B cell (primary cell): ENCODE measurements at regions of chr19 and their contacts with region 1.

Region 1: DNA sequence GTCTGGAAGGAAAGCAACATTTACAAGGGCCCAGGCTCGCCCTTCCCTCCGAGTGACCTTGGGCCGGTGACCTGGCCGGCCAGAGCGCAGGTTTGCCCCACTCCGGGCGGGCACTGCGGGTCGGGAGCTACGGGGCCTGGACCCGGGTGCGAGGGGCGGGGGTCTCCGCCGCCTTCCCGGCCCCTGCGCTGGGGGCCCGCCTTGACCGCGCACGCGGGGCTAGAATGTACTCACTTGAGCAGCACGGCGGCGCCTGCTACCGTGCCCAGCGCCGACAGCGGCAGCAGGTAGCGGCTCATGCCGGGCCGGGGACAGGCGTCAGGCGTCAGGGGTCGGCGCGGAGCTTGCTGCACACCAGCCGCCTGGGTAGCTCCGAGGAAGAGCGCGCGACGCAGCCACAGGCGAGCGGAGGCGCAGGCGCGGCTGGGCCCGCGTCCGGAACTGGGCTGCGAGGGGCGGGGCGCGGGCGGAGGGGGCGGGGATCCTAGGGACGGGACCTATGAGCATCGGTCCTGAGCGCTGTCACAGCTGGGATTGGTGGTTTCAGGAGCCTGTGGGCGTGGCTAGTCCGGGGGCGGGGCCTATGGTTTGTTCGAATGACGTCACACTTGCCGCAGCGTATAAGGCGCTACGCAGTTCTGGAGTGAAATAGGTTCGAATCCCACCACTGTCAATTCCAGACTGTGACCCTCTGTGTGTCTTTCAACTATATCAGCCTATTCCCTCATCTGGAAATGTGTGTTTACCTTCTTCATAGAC is at the start of gene RDH13:
- DNase-seq: peak; percentile 96
- ATAC-seq: peak; percentile 99
- H3K4me3 ChIP-seq: peak within 1 kb of the TSS in 4 of 5 experiments; percentile 49 to 68 (median 64)
- H3K4me3 Mint-ChIP-seq: peak within 1 kb of the TSS; percentile 82
- H3K27ac ChIP-seq: peak within 1 kb of the TSS; percentile 38 to 71
- H3K27ac Mint-ChIP-seq: peak within 1 kb of the TSS; percentile 77
- H3K4me1 ChIP-seq: peaks cover 7 to 13% of the 10 kb centered on the region in 2 donors
- H3K4me1 Mint-ChIP-seq: peaks cover 6% of the 10 kb centered on the region
- H3K27me3 ChIP-seq: peaks cover 0 to 19% (median under 1%) of the 10 kb centered on the region in 4 experiments
- H3K27me3 Mint-ChIP-seq: peaks cover 16% of the 10 kb centered on the region
- CTCF ChIP-seq: no peak
- total RNA-seq, gene RDH13: 17.5 and 20.2 TPM in 2 replicates

Region 2: DNA sequence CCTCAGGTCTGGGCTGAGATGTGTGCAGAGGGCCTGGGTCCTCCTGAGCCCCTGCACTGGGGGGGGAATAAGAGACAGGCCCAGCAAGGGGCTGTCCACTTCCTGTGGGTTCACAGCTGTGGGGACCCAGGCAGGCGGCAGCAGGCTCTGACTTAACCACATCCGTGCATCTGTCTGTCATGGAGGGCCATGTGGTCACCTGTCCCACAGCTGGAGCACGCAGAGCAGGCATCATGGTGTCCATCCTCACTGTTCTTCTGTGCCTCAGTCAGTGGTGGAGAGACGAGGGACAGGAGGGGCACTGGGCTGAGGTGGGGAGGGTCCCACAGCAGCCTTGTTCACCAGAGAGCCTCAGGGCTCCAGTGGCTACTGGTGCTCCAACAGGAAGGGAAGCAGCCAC is 355.0 kb before region 1 on chr19:
- CTCF ChIA-PET with region 1: no interaction called
- POLR2A ChIA-PET with region 1: no interaction called
- intact Hi-C with region 1: no loop called
- DNase-seq: no peak
- ATAC-seq: no peak
- H3K4me3 ChIP-seq: no peak overlapping the region
- H3K4me3 Mint-ChIP-seq: no peak overlapping the region
- H3K27ac ChIP-seq: no peak overlapping the region
- H3K27ac Mint-ChIP-seq: no peak overlapping the region
- H3K4me1 ChIP-seq: no peaks in the 10 kb centered on the region
- H3K4me1 Mint-ChIP-seq: peaks cover 3% of the 10 kb centered on the region
- H3K27me3 ChIP-seq: peaks cover 0 to 6% (median 1%) of the 10 kb centered on the region in 4 experiments
- H3K27me3 Mint-ChIP-seq: peaks cover 16% of the 10 kb centered on the region
- CTCF ChIP-seq: no peak

Region 3: GRCh38 chr19:55080968-55081772 is 18.3 kb after region 1 on chr19:
- CTCF ChIA-PET with region 1: no interaction called
- POLR2A ChIA-PET with region 1: interaction called, 15 read pairs
- intact Hi-C with region 1: loop called (anchors 1 kb)
- DNase-seq: peak; percentile 91
- ATAC-seq: peak; percentile 86
- H3K4me3 ChIP-seq: peak overlapping the region in 4 of 5 experiments; percentile 39 to 84 (median 59)
- H3K4me3 Mint-ChIP-seq: peak overlapping the region; percentile 88
- H3K27ac ChIP-seq: no peak overlapping the region
- H3K27ac Mint-ChIP-seq: peak overlapping the region; percentile 37
- H3K4me1 ChIP-seq: peaks cover 30% of the 10 kb centered on the region in 2 donors
- H3K4me1 Mint-ChIP-seq: peaks cover 33% of the 10 kb centered on the region
- H3K27me3 ChIP-seq: peaks cover 0 to 82% (median 26%) of the 10 kb centered on the region in 4 experiments
- H3K27me3 Mint-ChIP-seq: peaks cover 64% of the 10 kb centered on the region
- CTCF ChIP-seq: no peak